ENCODE measurements at regions of chr16 and their contacts with region 1.

Region 1: GRCh38 chr16:50024684-50025536 is at the start of gene CNEP1R1:
- DNase-seq: peak; percentile 85 to 95 (median 94)
- H3K4me3 ChIP-seq: peak within 1 kb of the TSS; percentile 86
- H3K4me3 Mint-ChIP-seq: peak within 1 kb of the TSS; percentile 88 to 99 (median 97)
- H3K27ac ChIP-seq: peak within 1 kb of the TSS; percentile 71
- H3K27ac Mint-ChIP-seq: peak within 1 kb of the TSS; percentile 89 to 98 (median 94)
- H3K4me1 ChIP-seq: peaks cover 13% of the 10 kb centered on the region
- H3K4me1 Mint-ChIP-seq: peaks cover 24 to 50% (median 40%) of the 10 kb centered on the region in 3 donors
- H3K27me3 ChIP-seq: no peaks in the 10 kb centered on the region
- H3K27me3 Mint-ChIP-seq: peaks cover 0 to 4% of the 10 kb centered on the region in 2 donors
- total RNA-seq, gene CNEP1R1: 21.2 to 23.6 TPM

Region 2: GRCh38 chr16:49993579-49993978 is 31.3 kb before region 1 on chr16:
- CTCF ChIA-PET with region 1: no interaction called
- POLR2A ChIA-PET with region 1: no interaction called
- DNase-seq: no peak
- H3K4me3 ChIP-seq: no peak overlapping the region
- H3K4me3 Mint-ChIP-seq: no peak overlapping the region
- H3K27ac ChIP-seq: no peak overlapping the region
- H3K27ac Mint-ChIP-seq: no peak overlapping the region
- H3K4me1 ChIP-seq: no peaks in the 10 kb centered on the region
- H3K4me1 Mint-ChIP-seq: no peaks in the 10 kb centered on the region
- H3K27me3 ChIP-seq: no peaks in the 10 kb centered on the region
- H3K27me3 Mint-ChIP-seq: peaks cover 18 to 25% of the 10 kb centered on the region in 2 donors

Region 3: DNA sequence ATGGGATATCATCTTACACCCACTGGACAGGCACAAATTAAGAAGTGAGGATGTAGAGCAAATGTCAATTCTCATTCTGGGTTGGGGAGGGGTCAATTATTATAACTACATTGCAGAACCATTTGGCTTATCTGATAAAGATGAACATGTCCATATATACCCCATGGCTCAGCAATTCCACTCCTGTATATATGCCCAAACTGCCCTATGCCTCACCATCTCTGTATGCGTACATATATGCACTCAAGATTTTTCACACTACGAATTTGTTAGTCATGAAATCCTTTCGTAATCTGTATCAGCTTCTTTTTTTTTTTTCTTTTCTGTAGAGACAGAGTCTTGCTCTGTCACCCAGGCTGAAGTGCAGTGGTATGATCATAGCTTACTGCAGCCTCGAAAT is 20.7 kb before region 1 on chr16:
- CTCF ChIA-PET with region 1: no interaction called
- POLR2A ChIA-PET with region 1: no interaction called
- DNase-seq: no peak
- H3K4me3 ChIP-seq: no peak overlapping the region
- H3K4me3 Mint-ChIP-seq: no peak overlapping the region
- H3K27ac ChIP-seq: no peak overlapping the region
- H3K27ac Mint-ChIP-seq: no peak overlapping the region
- H3K4me1 ChIP-seq: no peaks in the 10 kb centered on the region
- H3K4me1 Mint-ChIP-seq: no peaks in the 10 kb centered on the region
- H3K27me3 ChIP-seq: no peaks in the 10 kb centered on the region
- H3K27me3 Mint-ChIP-seq: peaks cover 9 to 26% of the 10 kb centered on the region in 2 donors

Region 4: GRCh38 chr16:50038756-50039529 is 14.0 kb after region 1 on chr16:
- CTCF ChIA-PET with region 1: interaction called, 22 read pairs
- POLR2A ChIA-PET with region 1: no interaction called
- DNase-seq: no peak
- H3K4me3 ChIP-seq: no peak overlapping the region
- H3K4me3 Mint-ChIP-seq: no peak overlapping the region
- H3K27ac ChIP-seq: no peak overlapping the region
- H3K27ac Mint-ChIP-seq: peak overlapping the region in 1 of 8 donors; percentile 58
- H3K4me1 ChIP-seq: no peaks in the 10 kb centered on the region
- H3K4me1 Mint-ChIP-seq: no peaks in the 10 kb centered on the region
- H3K27me3 ChIP-seq: no peaks in the 10 kb centered on the region
- H3K27me3 Mint-ChIP-seq: peaks cover 1 to 14% of the 10 kb centered on the region in 2 donors

Region 5: DNA sequence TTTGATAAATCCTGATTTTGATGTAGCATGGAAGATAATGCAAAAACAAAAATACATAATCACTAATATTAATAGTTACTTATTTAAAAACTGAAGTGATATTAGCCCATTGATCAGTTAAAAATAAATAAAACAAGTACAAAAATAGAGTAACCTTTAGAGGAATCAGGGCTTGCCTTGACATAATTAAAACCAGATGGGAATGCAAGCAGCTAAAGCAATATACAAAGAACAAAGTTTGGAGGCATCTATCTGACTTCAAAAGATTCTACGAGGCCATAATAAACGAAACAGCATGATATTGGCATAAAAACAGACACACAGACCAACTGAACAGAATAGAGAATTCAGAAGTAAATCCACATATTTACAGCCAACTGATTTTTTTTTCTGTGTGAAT is 25.9 kb after region 1 on chr16:
- CTCF ChIA-PET with region 1: no interaction called
- POLR2A ChIA-PET with region 1: no interaction called
- DNase-seq: no peak
- H3K4me3 ChIP-seq: no peak overlapping the region
- H3K4me3 Mint-ChIP-seq: no peak overlapping the region
- H3K27ac ChIP-seq: no peak overlapping the region
- H3K27ac Mint-ChIP-seq: no peak overlapping the region
- H3K4me1 ChIP-seq: no peaks in the 10 kb centered on the region
- H3K4me1 Mint-ChIP-seq: no peaks in the 10 kb centered on the region
- H3K27me3 ChIP-seq: no peaks in the 10 kb centered on the region
- H3K27me3 Mint-ChIP-seq: peaks cover 11 to 20% of the 10 kb centered on the region in 2 donors

Region 6: GRCh38 chr16:50065624-50066481 is 40.9 kb after region 1 on chr16 and contains the start of gene HEATR3:
- CTCF ChIA-PET with region 1: interaction called, 22 read pairs
- POLR2A ChIA-PET with region 1: interaction called, 10 read pairs
- DNase-seq: peak; percentile 87 to 95 (median 89)
- H3K4me3 ChIP-seq: peak within 1 kb of the TSS; percentile 94
- H3K4me3 Mint-ChIP-seq: peak within 1 kb of the TSS; percentile 88 to 97 (median 94)
- H3K27ac ChIP-seq: peak within 1 kb of the TSS; percentile 74
- H3K27ac Mint-ChIP-seq: peak within 1 kb of the TSS; percentile 78 to 97 (median 93)
- H3K4me1 ChIP-seq: peaks cover 24% of the 10 kb centered on the region
- H3K4me1 Mint-ChIP-seq: peaks cover 34 to 50% (median 46%) of the 10 kb centered on the region in 3 donors
- H3K27me3 ChIP-seq: no peaks in the 10 kb centered on the region
- H3K27me3 Mint-ChIP-seq: peaks cover 0 to 1% of the 10 kb centered on the region in 2 donors
- total RNA-seq, gene HEATR3: 25.5 to 26.2 TPM

Region 7: GRCh38 chr16:50152807-50153452 is 128.0 kb after region 1 on chr16 and contains the start of gene TENT4B:
- CTCF ChIA-PET with region 1: interaction called, 12 read pairs
- POLR2A ChIA-PET with region 1: no interaction called
- DNase-seq: peak; percentile 83 to 96 (median 91)
- H3K4me3 ChIP-seq: peak within 1 kb of the TSS; percentile 77
- H3K4me3 Mint-ChIP-seq: peak within 1 kb of the TSS; percentile 92 to 96 (median 95)
- H3K27ac ChIP-seq: peak within 1 kb of the TSS; percentile 76
- H3K27ac Mint-ChIP-seq: peak within 1 kb of the TSS; percentile 89 to 99 (median 98)
- H3K4me1 ChIP-seq: peaks cover 40% of the 10 kb centered on the region
- H3K4me1 Mint-ChIP-seq: peaks cover 35 to 40% (median 39%) of the 10 kb centered on the region in 3 donors
- H3K27me3 ChIP-seq: no peaks in the 10 kb centered on the region
- H3K27me3 Mint-ChIP-seq: no peaks in the 10 kb centered on the region
- total RNA-seq, gene TENT4B: 21.6 to 23.0 TPM